ENCODE measurements at regions of chr2 and their contacts with region 1.

Region 1: GRCh38 chr2:203683932-203684556 is 22.4 kb upstream of the CD28 start:
- DNase-seq: peak; percentile 93
- H3K4me3 ChIP-seq: no peak overlapping the region
- H3K27ac ChIP-seq: peak overlapping the region; percentile 97
- H3K27me3 ChIP-seq: no peaks in the 10 kb centered on the region
- CTCF ChIP-seq: no peak

Region 2: GRCh38 chr2:203804070-203804469 is 120.0 kb after region 1 on chr2:
- in situ Hi-C with region 1: loop called (anchors 10 kb)
- DNase-seq: peak; percentile 99
- H3K4me3 ChIP-seq: no peak overlapping the region
- H3K27ac ChIP-seq: peak overlapping the region; percentile 98
- H3K27me3 ChIP-seq: no peaks in the 10 kb centered on the region
- CTCF ChIP-seq: no peak

Region 3: DNA sequence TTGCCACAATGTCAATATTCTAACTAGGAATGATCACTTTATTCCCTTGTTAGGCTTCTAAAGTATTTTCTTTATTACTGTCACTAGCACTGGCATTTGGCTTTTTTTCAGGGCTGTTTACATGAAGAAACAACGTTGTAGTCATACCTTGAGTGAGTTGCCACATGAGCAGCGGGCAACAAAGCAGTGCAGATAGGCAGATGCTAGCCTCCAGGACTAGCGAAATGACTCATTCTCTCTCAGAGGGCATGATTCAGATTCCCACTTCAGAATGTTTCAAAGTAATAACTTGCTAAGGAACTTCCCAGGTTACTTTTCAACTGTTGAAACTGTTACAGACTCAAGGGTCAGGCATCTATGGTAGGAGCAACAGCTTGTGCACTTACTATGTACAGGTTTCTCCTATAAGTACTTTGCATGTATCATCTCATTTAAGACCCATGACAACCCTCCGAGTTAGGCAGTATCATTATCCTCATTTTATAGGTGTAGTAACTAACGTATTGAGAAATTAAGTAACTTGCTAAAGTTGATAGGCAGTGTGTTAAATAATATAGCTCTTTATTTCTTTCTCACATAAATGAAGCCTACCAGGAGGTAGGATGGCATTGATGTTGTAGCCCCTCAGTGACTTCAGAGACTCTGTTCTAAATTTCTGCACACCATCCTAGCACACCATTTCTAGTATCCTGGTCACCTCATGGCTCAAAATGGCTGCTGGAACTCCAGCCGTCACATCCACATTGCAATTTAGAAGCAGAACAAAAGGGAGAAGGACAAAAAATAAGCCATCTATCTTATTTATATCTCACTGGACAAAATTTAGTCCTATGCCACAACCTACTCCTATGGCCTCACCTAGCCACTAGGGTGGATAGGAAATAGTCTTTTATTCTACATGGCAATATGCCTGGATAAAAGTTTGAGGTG is 335.8 kb after region 1 on chr2:
- in situ Hi-C with region 1: no loop called
- DNase-seq: peak; percentile 49
- H3K4me3 ChIP-seq: no peak overlapping the region
- H3K27ac ChIP-seq: no peak overlapping the region
- H3K27me3 ChIP-seq: no peaks in the 10 kb centered on the region
- CTCF ChIP-seq: no peak